ENCODE measurements at regions of chr22 and their contacts with region 1.

Region 1: DNA sequence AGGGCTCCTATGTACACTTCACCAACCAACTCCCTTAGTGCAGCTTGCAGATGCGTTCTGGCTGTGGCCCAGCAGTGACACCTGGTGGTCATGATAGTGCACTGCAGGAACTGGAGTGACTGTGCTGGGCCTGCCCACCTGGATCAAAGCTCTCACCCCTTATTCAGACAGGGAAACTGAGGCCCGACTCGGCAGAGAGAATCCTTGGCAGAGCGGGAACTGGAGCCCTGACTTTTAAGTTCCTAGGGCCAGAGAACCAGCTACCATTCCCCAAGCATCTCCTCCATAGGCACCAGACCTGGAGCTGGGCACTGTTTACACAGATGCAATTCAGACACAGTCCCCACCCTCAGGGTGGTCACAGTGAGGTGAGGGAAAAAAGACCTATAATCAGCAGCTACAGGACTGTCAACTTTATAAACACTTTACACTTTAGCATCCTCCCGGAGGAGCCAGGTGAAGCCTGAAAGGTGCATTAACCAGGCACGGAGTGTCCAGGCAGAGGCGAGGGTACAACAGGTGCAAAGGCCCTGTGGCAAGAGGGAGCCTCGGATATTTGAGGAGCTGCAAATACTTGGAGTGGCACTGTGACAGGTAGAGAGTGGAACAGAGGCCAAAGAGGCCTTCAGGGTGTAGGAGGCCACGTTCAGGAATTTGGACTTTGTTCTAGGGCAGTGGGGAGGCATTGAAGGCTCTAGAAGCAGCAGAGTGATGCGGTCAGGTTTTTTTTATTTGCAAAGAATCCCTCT is 22.0 kb downstream of the RHBDD3 start:
- DNase-seq: no peak
- ATAC-seq: peak; percentile 96
- H3K4me3 ChIP-seq: no peak overlapping the region
- H3K27ac ChIP-seq: no peak overlapping the region
- H3K4me1 ChIP-seq: no peaks in the 10 kb centered on the region
- H3K27me3 ChIP-seq: no peaks in the 10 kb centered on the region
- CTCF ChIP-seq: peak; percentile 92 to 98 (median 96)
- EP300 ChIP-seq: no peak
- POLR2A ChIP-seq: no peak
- RAD21 ChIP-seq: peak; percentile 95

Region 2: GRCh38 chr22:28600546-28601143 is 645.2 kb before region 1 on chr22:
- CTCF ChIA-PET with region 1: interaction called, 9 read pairs
- POLR2A ChIA-PET with region 1: no interaction called
- RAD21 ChIA-PET with region 1: interaction called, 5 read pairs
- SMC1A ChIA-PET with region 1: interaction called, 7 read pairs
- in situ Hi-C with region 1: no loop called
- intact Hi-C with region 1: loop called (anchors 5 kb)
- DNase-seq: no peak
- ATAC-seq: peak; percentile 59
- H3K4me3 ChIP-seq: no peak overlapping the region
- H3K27ac ChIP-seq: no peak overlapping the region
- H3K4me1 ChIP-seq: no peaks in the 10 kb centered on the region
- H3K27me3 ChIP-seq: no peaks in the 10 kb centered on the region
- CTCF ChIP-seq: peak; percentile 23 to 63 (median 37); a peak in 4 of 6 replicates
- EP300 ChIP-seq: no peak
- POLR2A ChIP-seq: no peak
- RAD21 ChIP-seq: peak; percentile 87

Region 3: DNA sequence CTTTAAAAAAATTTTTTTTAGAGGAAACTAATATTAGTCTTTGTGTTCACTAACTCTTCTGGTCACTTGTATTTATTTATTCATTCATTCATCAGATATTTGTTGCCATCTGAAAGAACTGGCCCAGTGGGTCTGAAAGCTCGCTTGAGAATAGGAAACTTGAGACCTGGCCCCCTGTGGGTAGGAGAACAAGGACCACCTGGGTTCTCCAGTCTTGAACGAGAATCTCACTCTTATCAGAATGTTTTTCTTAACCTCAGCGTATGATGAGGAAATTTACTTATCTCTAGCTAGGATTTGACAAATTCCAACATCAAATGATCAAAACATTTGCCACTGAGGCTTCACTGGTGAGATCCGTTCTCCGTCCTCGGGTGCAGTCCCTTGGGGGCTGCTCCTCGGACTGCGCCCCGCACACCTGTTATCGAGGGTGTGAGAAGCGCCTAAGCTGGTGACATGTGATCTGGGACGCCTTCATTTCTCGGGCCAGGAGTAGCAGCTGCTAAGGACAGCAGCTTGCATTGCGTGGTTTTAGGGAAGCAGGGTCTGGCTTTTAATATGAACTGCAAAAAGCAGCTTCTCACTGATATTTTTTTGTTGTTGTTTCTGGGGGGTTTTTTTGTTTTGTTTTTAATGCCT is 190.5 kb before region 1 on chr22:
- CTCF ChIA-PET with region 1: interaction called, 17 read pairs
- POLR2A ChIA-PET with region 1: no interaction called
- RAD21 ChIA-PET with region 1: interaction called, 3 read pairs
- SMC1A ChIA-PET with region 1: interaction called, 4 read pairs
- in situ Hi-C with region 1: no loop called
- intact Hi-C with region 1: no loop called
- DNase-seq: no peak
- ATAC-seq: no peak
- H3K4me3 ChIP-seq: no peak overlapping the region
- H3K27ac ChIP-seq: no peak overlapping the region
- H3K4me1 ChIP-seq: no peaks in the 10 kb centered on the region
- H3K27me3 ChIP-seq: peaks cover 0 to 2% of the 10 kb centered on the region in 2 experiments; a peak in 1 of 4 replicates
- CTCF ChIP-seq: no peak
- EP300 ChIP-seq: no peak
- POLR2A ChIP-seq: no peak
- RAD21 ChIP-seq: no peak

Region 4: GRCh38 chr22:29202212-29203192 is 43.3 kb before region 1 on chr22:
- CTCF ChIA-PET with region 1: interaction called, 62 read pairs
- POLR2A ChIA-PET with region 1: interaction called, 7 read pairs
- RAD21 ChIA-PET with region 1: interaction called, 26 read pairs
- SMC1A ChIA-PET with region 1: interaction called, 26 read pairs
- in situ Hi-C with region 1: no loop called
- intact Hi-C with region 1: no loop called
- DNase-seq: peak; percentile 91
- ATAC-seq: peak; percentile 77
- H3K4me3 ChIP-seq: peak overlapping the region; percentile 15; the same call in 1 of the 2 replicates
- H3K27ac ChIP-seq: peak overlapping the region; percentile 90
- H3K4me1 ChIP-seq: peaks cover 45% of the 10 kb centered on the region
- H3K27me3 ChIP-seq: no peaks in the 10 kb centered on the region; a peak in 1 of 4 replicates
- CTCF ChIP-seq: peak; percentile 41 to 43 (median 42); a peak in 4 of 6 replicates
- EP300 ChIP-seq: peak; percentile 76 to 94
- POLR2A ChIP-seq: peak; percentile 79
- RAD21 ChIP-seq: peak; percentile 15; the same call in 1 of the 2 replicates

Region 5: GRCh38 chr22:29231971-29232959 is 13.5 kb before region 1 on chr22:
- CTCF ChIA-PET with region 1: interaction called, 18 read pairs
- POLR2A ChIA-PET with region 1: interaction called, 4 read pairs
- RAD21 ChIA-PET with region 1: interaction called, 5 read pairs
- SMC1A ChIA-PET with region 1: interaction called, 4 read pairs
- in situ Hi-C with region 1: no loop called
- intact Hi-C with region 1: no loop called
- DNase-seq: no peak
- ATAC-seq: peak; percentile 36
- H3K4me3 ChIP-seq: no peak overlapping the region
- H3K27ac ChIP-seq: no peak overlapping the region
- H3K4me1 ChIP-seq: no peaks in the 10 kb centered on the region
- H3K27me3 ChIP-seq: no peaks in the 10 kb centered on the region
- CTCF ChIP-seq: no peak
- EP300 ChIP-seq: no peak
- POLR2A ChIP-seq: no peak
- RAD21 ChIP-seq: no peak

Region 6: GRCh38 chr22:29369460-29369859 is 123.6 kb after region 1 on chr22:
- CTCF ChIA-PET with region 1: no interaction called
- POLR2A ChIA-PET with region 1: no interaction called
- RAD21 ChIA-PET with region 1: no interaction called
- SMC1A ChIA-PET with region 1: no interaction called
- in situ Hi-C with region 1: no loop called
- intact Hi-C with region 1: no loop called
- DNase-seq: no peak
- ATAC-seq: no peak
- H3K4me3 ChIP-seq: no peak overlapping the region
- H3K27ac ChIP-seq: no peak overlapping the region
- H3K4me1 ChIP-seq: peaks cover 12% of the 10 kb centered on the region
- H3K27me3 ChIP-seq: no peaks in the 10 kb centered on the region
- CTCF ChIP-seq: no peak
- EP300 ChIP-seq: no peak
- POLR2A ChIP-seq: no peak
- RAD21 ChIP-seq: no peak

Measured in GM12878 (cell line).